Mammary epithelial cell (primary cell): ENCODE measurements at regions of chr6 and their contacts with region 1.

Region 1: GRCh38 chr6:2363211-2363610 is 117.8 kb upstream of the GMDS start:
- DNase-seq: peak; percentile 46
- H3K4me3 ChIP-seq: no peak overlapping the region
- H3K27ac ChIP-seq: no peak overlapping the region
- H3K4me1 ChIP-seq: no peaks in the 10 kb centered on the region
- H3K27me3 ChIP-seq: no peaks in the 10 kb centered on the region
- CTCF ChIP-seq: no peak

Region 2: DNA sequence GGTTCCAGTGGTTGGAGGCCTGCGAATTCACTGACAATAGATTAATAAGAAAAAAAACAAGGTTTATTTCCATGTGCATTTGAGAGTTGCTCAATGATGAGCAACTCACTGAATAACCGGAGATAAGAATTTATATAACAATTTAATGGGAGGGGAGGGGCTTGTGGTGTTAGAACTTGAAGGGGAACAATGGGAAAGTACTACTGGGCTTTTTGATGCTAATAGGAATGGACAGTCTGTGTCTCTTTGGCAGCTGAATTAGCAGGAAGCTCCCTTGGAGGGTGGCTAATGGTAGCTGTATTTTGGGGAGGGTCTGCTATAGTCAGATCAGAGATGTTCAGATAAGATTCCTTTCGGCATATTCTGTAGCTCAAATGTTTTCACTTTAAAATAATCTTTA is 55.4 kb before region 1 on chr6:
- CTCF ChIA-PET with region 1: no interaction called
- dilution Hi-C with region 1: no loop called
- in situ Hi-C with region 1: no loop called
- intact Hi-C with region 1: loop called (anchors 10 kb)
- DNase-seq: no peak
- H3K4me3 ChIP-seq: no peak overlapping the region
- H3K27ac ChIP-seq: no peak overlapping the region
- H3K4me1 ChIP-seq: no peaks in the 10 kb centered on the region
- H3K27me3 ChIP-seq: no peaks in the 10 kb centered on the region
- CTCF ChIP-seq: no peak